Heart left ventricle (tissue), 16 donors: ENCODE measurements at regions of chr17 and their contacts with region 1.

Region 1: GRCh38 chr17:27654654-27655524 is 23.9 kb downstream of the LGALS9 start:
- DNase-seq: peak; percentile 50 to 82 (median 69)
- ATAC-seq: peak in 3 of 4 donors; percentile 35 to 46 (median 40)
- H3K4me3 ChIP-seq: no peak overlapping the region
- H3K27ac ChIP-seq: no peak overlapping the region
- H3K4me1 ChIP-seq: peaks cover 0 to 5% (median 0%) of the 10 kb centered on the region in 12 donors
- H3K27me3 ChIP-seq: no peaks in the 10 kb centered on the region
- CTCF ChIP-seq: peak; percentile 83 to 99 (median 92)
- POLR2A ChIP-seq: no peak

Region 2: DNA sequence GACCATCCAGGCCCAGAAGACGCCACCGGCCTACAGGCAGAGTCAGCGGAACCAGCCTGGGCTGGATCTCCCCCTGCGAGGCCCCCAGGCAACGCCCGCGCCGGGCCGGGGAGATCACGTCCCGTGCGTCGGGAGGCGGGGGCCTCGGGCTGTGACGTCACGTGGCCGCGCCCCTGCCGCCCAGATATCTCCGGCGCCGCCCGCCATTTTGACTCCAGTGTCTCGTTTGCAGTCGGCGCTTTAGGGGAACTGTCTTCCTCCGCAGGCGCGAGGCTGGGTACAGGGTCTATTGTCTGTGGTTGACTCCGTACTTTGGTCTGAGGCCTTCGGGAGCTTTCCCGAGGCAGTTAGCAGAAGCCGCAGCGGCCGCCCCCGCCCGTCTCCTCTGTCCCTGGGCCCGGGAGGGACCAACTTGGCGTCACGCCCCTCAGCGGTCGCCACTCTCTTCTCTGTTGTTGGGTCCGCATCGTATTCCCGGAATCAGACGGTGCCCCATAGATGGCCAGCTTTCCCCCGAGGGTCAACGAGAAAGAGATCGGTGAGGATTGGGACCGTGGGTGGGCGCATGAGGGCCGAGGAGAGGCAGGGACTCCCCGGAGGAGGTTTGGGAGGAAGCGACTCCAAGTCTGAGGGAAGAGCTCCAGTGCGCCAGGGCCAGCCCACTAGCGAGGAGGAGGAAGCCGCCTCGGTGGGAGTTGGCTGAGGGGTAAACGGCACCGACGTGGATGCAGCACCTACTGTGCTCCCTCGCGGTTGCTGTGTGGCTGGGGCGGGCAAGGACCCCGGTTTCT is 360.8 kb before region 1 on chr17 and contains the start of gene WSB1:
- intact Hi-C with region 1: no loop called
- DNase-seq: peak; percentile 95 to 97 (median 96)
- ATAC-seq: peak; percentile 95 to 97 (median 97)
- H3K4me3 ChIP-seq: peak within 1 kb of the TSS; percentile 72 to 99 (median 80)
- H3K27ac ChIP-seq: peak within 1 kb of the TSS; percentile 98 to 100 (median 99)
- H3K4me1 ChIP-seq: peaks cover 11 to 44% (median 34%) of the 10 kb centered on the region in 12 donors
- H3K27me3 ChIP-seq: peaks cover 0 to 4% (median 0%) of the 10 kb centered on the region in 9 donors
- CTCF ChIP-seq: peak in 1 of 12 donors; percentile 11
- POLR2A ChIP-seq: peak; percentile 80 to 98
- total RNA-seq, gene WSB1: 22.3 to 119 (median 53.4) TPM

Region 3: DNA sequence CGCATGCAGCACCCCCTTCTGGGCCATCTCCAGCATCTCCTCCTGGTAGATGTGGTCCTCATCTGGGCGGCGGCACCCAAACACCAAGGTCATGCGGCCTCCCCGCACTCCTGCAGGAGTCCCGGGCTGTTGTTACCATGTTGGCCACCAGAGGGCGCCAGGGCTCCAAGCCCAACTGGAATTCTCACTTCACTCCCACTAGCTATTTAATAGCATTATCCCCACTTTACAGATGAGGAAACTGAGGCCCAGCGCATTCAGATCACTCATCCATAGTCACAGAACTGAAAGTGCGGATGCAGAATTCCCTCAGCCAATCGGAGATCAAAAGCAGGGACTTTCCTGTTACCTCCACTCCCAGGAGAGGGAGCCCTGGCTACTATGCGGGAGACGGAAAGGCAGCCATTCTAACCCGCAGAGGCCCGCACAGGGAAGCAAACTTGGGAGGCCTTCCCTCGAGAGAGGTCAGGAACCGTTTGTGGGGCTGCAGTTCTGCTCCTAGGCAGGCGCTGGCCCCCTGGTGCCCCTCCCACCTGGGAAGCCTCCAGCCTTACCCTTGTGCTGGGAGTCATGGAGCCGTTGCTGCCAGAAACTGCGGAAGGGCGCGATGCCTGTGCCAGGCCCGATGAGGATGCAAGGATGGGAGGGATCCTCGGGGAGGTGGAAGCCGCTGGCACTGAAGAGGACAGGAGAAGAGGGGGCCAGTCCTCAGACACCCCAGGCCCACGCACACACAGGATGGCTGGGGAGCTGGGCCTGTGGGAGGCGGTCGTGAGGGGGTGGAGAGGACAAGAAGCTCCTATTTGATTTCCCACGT is 105.4 kb after region 1 on chr17:
- intact Hi-C with region 1: loop called in 9 of 10 experiments (anchors 1 to 10 kb)
- DNase-seq: peak; percentile 46 to 81 (median 65)
- ATAC-seq: peak in 3 of 4 donors; percentile 52 to 57 (median 55)
- H3K4me3 ChIP-seq: no peak overlapping the region
- H3K27ac ChIP-seq: no peak overlapping the region
- H3K4me1 ChIP-seq: no peaks in the 10 kb centered on the region
- H3K27me3 ChIP-seq: no peaks in the 10 kb centered on the region
- CTCF ChIP-seq: peak; percentile 76 to 95 (median 90)
- POLR2A ChIP-seq: no peak